ENCODE measurements at regions of chr4 and their contacts with region 1.

Region 1: DNA sequence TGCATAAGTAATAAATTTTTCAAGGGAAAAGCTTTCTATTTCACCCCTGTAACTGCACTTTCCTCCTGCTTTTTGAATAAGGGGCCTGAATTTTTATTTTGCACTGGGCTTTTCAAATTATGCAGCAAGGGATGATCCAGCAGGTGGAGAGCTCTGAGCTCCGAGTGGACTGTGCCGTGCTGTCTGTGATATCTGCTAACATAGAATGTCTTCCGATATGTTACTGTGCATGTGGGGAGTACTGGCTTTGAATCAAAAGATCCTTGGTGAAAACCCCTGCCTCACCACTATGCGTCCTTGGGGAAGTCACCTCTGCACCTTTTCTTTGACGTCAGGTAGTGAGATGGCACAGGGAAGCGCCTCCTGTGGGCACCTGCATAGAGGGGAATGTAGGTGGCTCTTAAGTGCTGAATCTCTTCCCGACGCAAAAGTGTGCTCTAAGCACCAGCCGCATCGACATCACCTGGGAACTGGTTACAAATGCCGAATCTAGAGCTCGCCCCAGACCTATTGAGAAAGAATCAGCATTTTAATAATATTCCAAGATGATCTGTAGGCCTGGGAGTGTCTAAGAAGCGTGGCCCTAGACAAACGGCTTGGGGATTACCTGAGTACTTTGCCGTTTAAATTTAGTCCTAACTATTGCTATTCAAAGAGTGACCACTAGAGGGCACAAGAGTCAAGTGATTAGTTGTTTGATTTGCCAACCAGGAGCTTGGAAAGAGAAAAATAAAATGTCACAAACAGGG is 19.2 kb upstream of the WFS1 start:
- DNase-seq: peak; percentile 42 to 49
- H3K4me3 ChIP-seq: no peak overlapping the region
- H3K4me1 ChIP-seq: no peaks in the 10 kb centered on the region
- H3K27me3 ChIP-seq: peaks cover 28% of the 10 kb centered on the region

Region 2: GRCh38 chr4:6546681-6547447 is 296.5 kb after region 1 on chr4:
- in situ Hi-C with region 1: loop called (anchors 10 kb)
- DNase-seq: peak; percentile 24 to 68
- H3K4me3 ChIP-seq: no peak overlapping the region
- H3K4me1 ChIP-seq: no peaks in the 10 kb centered on the region
- H3K27me3 ChIP-seq: peaks cover 20% of the 10 kb centered on the region; the same call in 1 of the 2 replicates